ENCODE measurements at regions of chr1 and their contacts with region 1.

Region 1: DNA sequence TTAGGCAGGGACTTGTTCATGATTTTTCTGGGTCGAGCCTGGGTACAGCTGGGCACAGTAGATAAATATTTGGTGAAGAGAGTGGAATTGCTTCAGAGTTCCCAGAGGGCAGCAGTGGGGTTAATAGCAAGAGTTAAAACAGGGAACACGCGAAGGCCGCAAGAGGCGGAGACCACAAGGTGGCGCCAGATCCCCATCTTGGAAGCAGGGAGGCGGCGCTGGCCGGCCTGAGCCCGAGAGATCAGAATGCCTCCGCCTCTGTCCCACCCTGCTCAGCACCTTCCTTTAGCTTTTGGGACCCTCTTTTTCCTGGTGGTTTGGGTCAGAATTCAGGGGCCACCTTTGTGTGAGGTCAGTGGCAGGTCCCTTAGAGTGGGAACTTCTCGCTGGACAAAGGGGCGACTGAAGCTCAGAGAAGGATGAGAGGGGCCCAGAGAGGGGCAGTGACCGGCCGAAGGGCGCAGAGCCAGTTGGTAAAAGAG is 6.5 kb upstream of the PADI2 start:
- DNase-seq: peak; percentile 86
- ATAC-seq: peak; percentile 87
- H3K4me3 Mint-ChIP-seq: no peak overlapping the region
- H3K27ac Mint-ChIP-seq: no peak overlapping the region
- H3K4me1 Mint-ChIP-seq: peaks cover 1% of the 10 kb centered on the region
- H3K27me3 Mint-ChIP-seq: peaks cover 10% of the 10 kb centered on the region

Region 2: GRCh38 chr1:16727190-16728111 is 398.3 kb before region 1 on chr1:
- CTCF ChIA-PET with region 1: no interaction called
- POLR2A ChIA-PET with region 1: no interaction called
- DNase-seq: peak; percentile 45
- ATAC-seq: peak; percentile 30
- H3K4me3 Mint-ChIP-seq: no peak overlapping the region
- H3K27ac Mint-ChIP-seq: no peak overlapping the region
- H3K4me1 Mint-ChIP-seq: peaks cover 2% of the 10 kb centered on the region
- H3K27me3 Mint-ChIP-seq: no peaks in the 10 kb centered on the region

Region 3: DNA sequence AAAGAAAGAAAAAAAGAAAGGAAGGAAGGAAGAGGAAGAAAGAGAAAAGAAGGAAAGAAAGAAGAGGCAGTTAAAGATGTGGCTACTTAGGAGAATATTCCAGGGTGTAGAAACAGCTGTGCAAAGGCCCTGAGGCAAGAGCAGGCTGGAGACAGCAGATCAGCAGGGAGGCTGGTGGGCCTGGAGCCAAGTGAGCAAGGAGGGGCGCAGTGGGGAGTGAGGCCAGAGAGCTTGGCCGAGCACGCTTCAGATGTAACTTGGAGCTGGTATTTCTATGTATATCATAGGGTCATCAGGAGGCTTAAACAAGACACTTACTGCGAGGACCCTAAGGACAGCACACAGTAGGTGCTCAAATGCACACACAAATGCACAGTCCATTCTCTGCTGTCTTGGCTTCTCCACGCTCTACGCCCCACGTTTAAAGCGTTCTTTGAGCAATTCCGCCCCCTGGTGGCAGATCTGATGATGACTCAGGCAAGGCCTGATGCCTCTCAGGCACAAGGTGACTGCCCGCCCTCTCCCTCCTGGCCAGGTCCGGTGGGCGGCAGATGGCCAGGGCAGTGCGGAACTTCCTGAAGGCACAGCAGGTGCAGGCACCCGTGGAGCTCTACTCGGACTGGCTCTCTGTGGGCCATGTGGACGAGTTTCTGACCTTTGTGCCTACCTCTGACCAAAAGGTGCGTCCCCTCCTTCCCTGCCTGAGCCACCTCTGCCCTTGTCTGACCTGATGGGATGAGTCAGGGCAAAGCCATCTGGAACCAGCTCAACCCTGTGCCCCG is 111.2 kb after region 1 on chr1:
- CTCF ChIA-PET with region 1: interaction called, 80 read pairs
- POLR2A ChIA-PET with region 1: no interaction called
- DNase-seq: peak; percentile 91
- ATAC-seq: peak; percentile 87
- H3K4me3 Mint-ChIP-seq: no peak overlapping the region
- H3K27ac Mint-ChIP-seq: no peak overlapping the region
- H3K4me1 Mint-ChIP-seq: peaks cover 3% of the 10 kb centered on the region
- H3K27me3 Mint-ChIP-seq: peaks cover 5% of the 10 kb centered on the region